H1 (cell line): ENCODE measurements at regions of chr18 and their contacts with region 1.

Region 1: GRCh38 chr18:58195278-58195765 is 151.3 kb downstream of the NEDD4L start:
- DNase-seq: peak in 1 of 2 experiments; percentile 67
- H3K4me3 ChIP-seq: peak overlapping the region; percentile 56 to 72 (median 68)
- H3K27ac ChIP-seq: 0 out of 2 replicates have a peak overlapping the region, but pooled peaks have one; percentile 52
- H3K4me1 ChIP-seq: peaks cover 14 to 25% (median 23%) of the 10 kb centered on the region in 4 experiments
- H3K27me3 ChIP-seq: no peaks in the 10 kb centered on the region
- CTCF ChIP-seq: no peak
- EP300 ChIP-seq: no peak
- POLR2A ChIP-seq: no peak; a peak in 1 of 3 replicates
- RAD21 ChIP-seq: no peak

Region 2: DNA sequence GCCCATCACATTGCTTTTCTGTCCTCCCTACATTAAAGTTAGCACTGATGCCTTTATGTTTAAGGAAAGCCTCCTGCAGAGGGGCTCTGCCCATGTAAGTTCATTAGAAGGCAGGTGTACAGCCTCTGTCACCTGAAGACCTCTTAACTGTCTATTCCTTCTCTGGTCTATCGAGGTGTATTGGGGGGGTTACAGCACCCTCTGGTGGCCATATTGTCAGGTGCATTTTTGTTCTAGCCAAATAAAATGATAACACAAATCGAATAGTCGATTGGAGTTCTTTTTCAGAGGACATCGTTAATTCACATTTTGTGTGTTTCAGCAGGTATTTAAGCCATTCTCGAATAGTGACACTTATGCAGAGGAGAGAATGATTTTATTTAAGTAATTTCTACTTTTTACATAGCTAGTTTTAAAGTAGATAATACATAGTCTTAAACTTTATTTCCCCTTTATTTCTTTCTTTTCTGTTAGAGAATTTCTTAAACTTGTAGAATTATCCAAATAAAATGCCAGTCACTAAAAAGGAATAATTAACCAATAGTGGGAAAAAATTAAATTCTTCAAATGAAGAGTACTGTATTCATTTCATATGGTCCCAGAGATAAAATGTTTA is 14.5 kb before region 1 on chr18:
- CTCF ChIA-PET with region 1: interaction called, 103 read pairs
- POLR2A ChIA-PET with region 1: interaction called, 4 read pairs
- DNase-seq: peak in 1 of 2 experiments; percentile 82
- H3K4me3 ChIP-seq: no peak overlapping the region
- H3K27ac ChIP-seq: no peak overlapping the region
- H3K4me1 ChIP-seq: peaks cover 0 to 17% (median 7%) of the 10 kb centered on the region in 4 experiments; a peak in 4 of 7 replicates
- H3K27me3 ChIP-seq: no peaks in the 10 kb centered on the region
- CTCF ChIP-seq: peak in 2 of 3 experiments; percentile 76 to 87; a peak in 3 of 4 replicates
- EP300 ChIP-seq: no peak
- POLR2A ChIP-seq: no peak
- RAD21 ChIP-seq: peak; percentile 74 to 83

Region 3: GRCh38 chr18:58205443-58206160 is 10.3 kb after region 1 on chr18:
- CTCF ChIA-PET with region 1: interaction called, 14 read pairs
- POLR2A ChIA-PET with region 1: no interaction called
- DNase-seq: no peak
- H3K4me3 ChIP-seq: no peak overlapping the region
- H3K27ac ChIP-seq: no peak overlapping the region
- H3K4me1 ChIP-seq: peaks cover 4 to 17% (median 8%) of the 10 kb centered on the region in 4 experiments
- H3K27me3 ChIP-seq: no peaks in the 10 kb centered on the region
- CTCF ChIP-seq: no peak
- EP300 ChIP-seq: no peak
- POLR2A ChIP-seq: no peak
- RAD21 ChIP-seq: no peak

Region 4: DNA sequence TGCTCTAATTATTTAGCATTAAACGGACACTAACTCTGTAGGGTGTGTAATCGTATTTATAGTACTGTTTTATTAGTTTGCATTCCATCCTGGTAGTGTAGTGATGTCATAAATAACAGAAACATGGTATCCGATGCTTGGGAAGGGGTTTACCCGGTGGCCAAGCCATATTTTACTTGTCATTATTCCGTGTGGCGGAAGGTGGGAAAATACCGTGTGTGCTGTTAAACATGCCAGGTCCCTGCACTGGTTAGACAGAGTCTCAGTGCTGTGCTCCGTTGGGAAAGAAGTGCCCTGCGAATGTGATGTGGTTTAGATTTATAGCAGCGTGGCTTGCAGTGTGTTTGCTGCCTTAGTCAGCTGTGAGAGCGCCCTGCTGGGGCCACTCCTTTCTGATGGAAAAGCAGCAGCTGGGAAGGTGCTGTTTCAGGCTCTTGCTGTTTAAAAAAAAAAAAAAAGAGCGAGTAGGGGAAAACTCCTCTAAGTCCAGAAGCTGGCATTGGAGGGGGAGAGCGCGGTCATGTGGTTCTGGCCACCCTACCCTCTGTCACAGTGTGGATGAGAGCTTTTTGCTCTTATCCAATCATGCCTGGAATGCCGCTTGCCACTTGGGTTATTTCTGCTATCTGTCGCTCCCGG is 59.7 kb after region 1 on chr18:
- CTCF ChIA-PET with region 1: interaction called, 14 read pairs
- POLR2A ChIA-PET with region 1: no interaction called
- DNase-seq: peak in 1 of 2 experiments; percentile 66
- H3K4me3 ChIP-seq: peak overlapping the region in 2 of 4 experiments; percentile 2 to 49; a peak in 5 of 8 replicates
- H3K27ac ChIP-seq: no peak overlapping the region
- H3K4me1 ChIP-seq: peaks cover 10 to 33% (median 22%) of the 10 kb centered on the region in 4 experiments
- H3K27me3 ChIP-seq: no peaks in the 10 kb centered on the region
- CTCF ChIP-seq: no peak
- EP300 ChIP-seq: no peak
- POLR2A ChIP-seq: no peak
- RAD21 ChIP-seq: 0 out of 4 replicates have a peak, but pooled peaks of 1 of the 2 experiments have one; percentile 2

Region 5: GRCh38 chr18:58316396-58317342 is 121.3 kb after region 1 on chr18:
- CTCF ChIA-PET with region 1: interaction called, 19 read pairs
- POLR2A ChIA-PET with region 1: interaction called, 3 read pairs
- DNase-seq: no peak
- H3K4me3 ChIP-seq: no peak overlapping the region
- H3K27ac ChIP-seq: no peak overlapping the region
- H3K4me1 ChIP-seq: peaks cover 0 to 7% (median 3%) of the 10 kb centered on the region in 4 experiments; a peak in 5 of 7 replicates
- H3K27me3 ChIP-seq: no peaks in the 10 kb centered on the region
- CTCF ChIP-seq: no peak
- EP300 ChIP-seq: no peak
- POLR2A ChIP-seq: no peak
- RAD21 ChIP-seq: no peak

Region 6: DNA sequence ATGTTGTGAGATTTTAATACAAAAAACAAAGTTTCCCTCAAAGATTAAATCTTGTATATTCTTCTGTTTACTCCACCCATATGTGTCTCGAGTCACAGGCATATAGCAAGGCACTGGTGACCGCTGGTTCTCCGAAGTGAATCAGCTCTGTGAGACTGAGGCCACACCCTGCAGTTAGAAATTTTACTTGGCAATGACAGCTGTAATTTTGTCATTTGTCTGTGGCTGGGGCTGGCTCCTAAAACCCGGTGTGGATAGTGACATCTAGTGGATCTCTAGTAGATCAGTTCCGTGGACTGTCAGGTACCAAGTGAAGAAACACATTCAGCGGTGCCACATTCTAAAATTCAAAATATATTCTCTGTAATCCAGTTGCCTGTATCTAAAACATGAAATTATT is 126.7 kb after region 1 on chr18:
- CTCF ChIA-PET with region 1: interaction called, 19 read pairs
- POLR2A ChIA-PET with region 1: interaction called, 3 read pairs
- DNase-seq: no peak
- H3K4me3 ChIP-seq: no peak overlapping the region
- H3K27ac ChIP-seq: no peak overlapping the region
- H3K4me1 ChIP-seq: no peaks in the 10 kb centered on the region; a peak in 1 of 7 replicates
- H3K27me3 ChIP-seq: no peaks in the 10 kb centered on the region
- CTCF ChIP-seq: peak in 2 of 3 experiments; percentile 51 to 59; a peak in 3 of 4 replicates
- EP300 ChIP-seq: no peak
- POLR2A ChIP-seq: no peak
- RAD21 ChIP-seq: peak; percentile 80 to 88

Region 7: GRCh38 chr18:58378411-58379379 is 183.4 kb after region 1 on chr18:
- CTCF ChIA-PET with region 1: no interaction called
- POLR2A ChIA-PET with region 1: no interaction called
- DNase-seq: no peak
- H3K4me3 ChIP-seq: no peak overlapping the region
- H3K27ac ChIP-seq: no peak overlapping the region
- H3K4me1 ChIP-seq: no peaks in the 10 kb centered on the region; a peak in 2 of 7 replicates
- H3K27me3 ChIP-seq: no peaks in the 10 kb centered on the region
- CTCF ChIP-seq: no peak
- EP300 ChIP-seq: no peak
- POLR2A ChIP-seq: no peak
- RAD21 ChIP-seq: no peak